Naive thymus-derived CD4-positive, alpha-beta T cell (primary cell): ENCODE measurements at regions of chr4 and their contacts with region 1.

Region 1: GRCh38 chr4:145618932-145619638 is at the start of gene MMAA:
- DNase-seq: peak; percentile 90 to 99 (median 92)
- ATAC-seq: peak; percentile 97
- H3K4me3 ChIP-seq: peak within 1 kb of the TSS; percentile 93
- H3K4me3 Mint-ChIP-seq: peak within 1 kb of the TSS; percentile 90 to 99 (median 98)
- H3K27ac ChIP-seq: peak within 1 kb of the TSS; percentile 94
- H3K27ac Mint-ChIP-seq: peak within 1 kb of the TSS; percentile 95 to 100 (median 99)
- H3K4me1 ChIP-seq: peaks cover 18 to 29% of the 10 kb centered on the region in 2 donors
- H3K4me1 Mint-ChIP-seq: peaks cover 16 to 55% (median 47%) of the 10 kb centered on the region in 7 donors
- H3K27me3 ChIP-seq: no peaks in the 10 kb centered on the region
- H3K27me3 Mint-ChIP-seq: peaks cover 1 to 5% (median 5%) of the 10 kb centered on the region in 5 donors
- total RNA-seq, gene MMAA: 7.2 to 17.3 (median 12.8) TPM

Region 2: GRCh38 chr4:145097821-145098674 is 521.0 kb before region 1 on chr4 and contains the starts of genes ABCE1 and ANAPC10:
- CTCF ChIA-PET with region 1: interaction called, 3 read pairs
- POLR2A ChIA-PET with region 1: interaction called, 6 read pairs
- intact Hi-C with region 1: loop called (anchors 1 kb)
- DNase-seq: peak; percentile 88 to 98 (median 94)
- ATAC-seq: peak; percentile 96
- H3K4me3 ChIP-seq: peak within 1 kb of the TSS; percentile 94
- H3K4me3 Mint-ChIP-seq: peak within 1 kb of the TSS in 9 of 10 donors; percentile 93 to 98 (median 96)
- H3K27ac ChIP-seq: peak within 1 kb of the TSS; percentile 80
- H3K27ac Mint-ChIP-seq: peak within 1 kb of the TSS; percentile 95 to 99 (median 98)
- H3K4me1 ChIP-seq: peaks cover 22 to 23% of the 10 kb centered on the region in 2 donors
- H3K4me1 Mint-ChIP-seq: peaks cover 28 to 52% (median 33%) of the 10 kb centered on the region in 7 donors
- H3K27me3 ChIP-seq: no peaks in the 10 kb centered on the region
- H3K27me3 Mint-ChIP-seq: no peaks in the 10 kb centered on the region
- total RNA-seq, gene ABCE1: 43.4 to 81.3 (median 62.2) TPM
- total RNA-seq, gene ANAPC10: 13.2 to 28.0 (median 19.6) TPM

Region 3: GRCh38 chr4:145234091-145234706 is 384.9 kb before region 1 on chr4:
- CTCF ChIA-PET with region 1: interaction called, 22 read pairs
- POLR2A ChIA-PET with region 1: interaction called, 5 read pairs
- intact Hi-C with region 1: loop called (anchors 1 kb)
- DNase-seq: peak; percentile 7 to 56 (median 46)
- ATAC-seq: peak; percentile 98
- H3K4me3 ChIP-seq: no peak overlapping the region
- H3K4me3 Mint-ChIP-seq: no peak overlapping the region
- H3K27ac ChIP-seq: no peak overlapping the region
- H3K27ac Mint-ChIP-seq: no peak overlapping the region
- H3K4me1 ChIP-seq: no peaks in the 10 kb centered on the region
- H3K4me1 Mint-ChIP-seq: no peaks in the 10 kb centered on the region
- H3K27me3 ChIP-seq: no peaks in the 10 kb centered on the region
- H3K27me3 Mint-ChIP-seq: peaks cover 0 to 16% (median 0%) of the 10 kb centered on the region in 5 donors

Region 4: GRCh38 chr4:145545538-145546174 is 73.4 kb before region 1 on chr4:
- CTCF ChIA-PET with region 1: no interaction called
- POLR2A ChIA-PET with region 1: no interaction called
- intact Hi-C with region 1: no loop called
- DNase-seq: no peak
- ATAC-seq: no peak
- H3K4me3 ChIP-seq: no peak overlapping the region
- H3K4me3 Mint-ChIP-seq: no peak overlapping the region
- H3K27ac ChIP-seq: no peak overlapping the region
- H3K27ac Mint-ChIP-seq: no peak overlapping the region
- H3K4me1 ChIP-seq: no peaks in the 10 kb centered on the region
- H3K4me1 Mint-ChIP-seq: peaks cover 0 to 3% (median 0%) of the 10 kb centered on the region in 7 donors
- H3K27me3 ChIP-seq: no peaks in the 10 kb centered on the region
- H3K27me3 Mint-ChIP-seq: peaks cover 0 to 7% (median 0%) of the 10 kb centered on the region in 5 donors

Region 5: DNA sequence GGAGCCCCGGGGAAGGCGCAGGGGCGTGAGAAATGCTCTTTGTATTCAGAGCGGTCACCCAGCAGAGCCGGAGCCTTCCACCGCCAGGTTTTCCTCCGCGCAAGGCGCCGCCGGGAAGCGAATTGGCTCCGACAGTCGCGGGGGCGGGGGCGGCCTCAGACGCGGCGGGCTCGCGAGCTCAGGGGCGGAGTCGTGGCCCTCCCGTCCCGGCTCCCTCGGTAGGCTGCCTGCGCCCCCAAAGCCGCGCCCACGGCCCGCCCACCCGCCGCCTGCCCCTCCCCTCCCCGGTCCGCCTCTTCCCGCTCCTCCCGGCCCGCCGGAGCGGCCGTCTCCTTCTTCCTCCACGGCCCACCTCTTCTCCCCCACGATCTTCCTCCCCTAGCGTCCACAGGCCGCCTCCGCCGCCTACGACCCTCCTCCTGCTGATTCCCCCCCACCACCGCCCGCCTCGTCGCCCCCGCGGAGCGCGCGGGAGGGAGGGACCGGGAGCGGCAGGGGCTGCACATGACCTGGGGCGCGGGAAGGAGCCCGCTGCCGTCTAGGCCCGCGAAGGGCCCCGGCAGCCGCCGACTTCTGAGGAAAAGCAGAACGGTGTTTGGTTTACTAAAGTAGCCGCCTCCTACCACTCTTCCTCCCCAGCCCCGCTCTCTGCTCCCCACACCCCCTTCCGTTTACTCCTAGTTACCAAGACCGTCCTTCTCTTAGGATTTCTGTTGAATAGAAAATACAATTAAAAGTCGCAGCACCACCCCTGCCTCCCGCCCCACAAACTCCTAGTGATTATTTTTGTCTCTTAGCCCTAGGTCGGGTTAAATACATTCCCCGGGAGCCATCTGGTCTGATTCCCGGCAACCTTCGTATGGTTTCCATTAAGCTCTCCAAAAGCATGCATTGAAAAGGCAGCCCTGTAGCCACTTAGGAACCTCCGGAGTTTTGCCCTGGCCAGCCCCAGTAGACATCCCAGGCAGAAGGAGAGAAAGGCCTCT is 114.1 kb after region 1 on chr4:
- CTCF ChIA-PET with region 1: no interaction called
- POLR2A ChIA-PET with region 1: interaction called, 5 read pairs
- intact Hi-C with region 1: loop called (anchors 1 kb)
- DNase-seq: peak; percentile 56 to 87 (median 68)
- ATAC-seq: peak; percentile 97
- H3K4me3 ChIP-seq: peak overlapping the region; percentile 59
- H3K4me3 Mint-ChIP-seq: peak overlapping the region; percentile 72 to 86 (median 82)
- H3K27ac ChIP-seq: peak overlapping the region; percentile 63
- H3K27ac Mint-ChIP-seq: peak overlapping the region in 5 of 9 donors; percentile 50 to 77 (median 62)
- H3K4me1 ChIP-seq: peaks cover 0 to 4% of the 10 kb centered on the region in 2 donors
- H3K4me1 Mint-ChIP-seq: peaks cover 0 to 13% (median 9%) of the 10 kb centered on the region in 7 donors
- H3K27me3 ChIP-seq: no peaks in the 10 kb centered on the region
- H3K27me3 Mint-ChIP-seq: peaks cover 0 to 11% (median 3%) of the 10 kb centered on the region in 5 donors

Region 6: DNA sequence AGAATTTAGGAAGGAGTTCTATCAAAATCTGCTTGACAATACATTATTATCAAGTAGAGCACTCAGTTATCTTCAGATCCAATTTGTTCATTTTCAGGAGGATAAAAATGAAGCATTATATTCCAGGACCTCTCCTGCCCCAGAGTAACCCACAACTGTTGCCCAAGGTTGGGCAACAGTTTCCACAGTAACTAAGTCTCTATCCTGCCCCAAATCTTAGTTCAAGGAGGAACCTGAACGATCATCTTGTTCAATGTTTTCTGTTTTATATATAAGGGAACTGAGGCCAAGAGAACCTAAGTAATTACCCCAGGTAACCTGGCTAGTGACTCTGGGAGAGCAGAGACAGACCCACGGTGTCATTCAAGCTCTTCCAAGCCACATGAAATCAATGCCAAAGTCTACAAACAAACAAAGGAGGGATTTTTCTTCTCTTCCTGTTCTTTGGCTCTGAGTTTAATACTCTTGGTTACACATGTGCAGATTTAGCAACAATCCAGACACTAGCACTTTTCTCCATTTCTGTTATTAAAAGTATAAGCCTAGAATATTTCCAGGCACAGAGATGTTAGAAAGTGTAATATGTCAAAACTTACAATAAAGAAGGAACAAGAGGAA is 166.4 kb after region 1 on chr4:
- CTCF ChIA-PET with region 1: no interaction called
- POLR2A ChIA-PET with region 1: no interaction called
- intact Hi-C with region 1: no loop called
- DNase-seq: no peak
- ATAC-seq: no peak
- H3K4me3 ChIP-seq: no peak overlapping the region
- H3K4me3 Mint-ChIP-seq: no peak overlapping the region
- H3K27ac ChIP-seq: no peak overlapping the region
- H3K27ac Mint-ChIP-seq: no peak overlapping the region
- H3K4me1 ChIP-seq: no peaks in the 10 kb centered on the region
- H3K4me1 Mint-ChIP-seq: peaks cover 0 to 9% (median 0%) of the 10 kb centered on the region in 7 donors
- H3K27me3 ChIP-seq: no peaks in the 10 kb centered on the region
- H3K27me3 Mint-ChIP-seq: no peaks in the 10 kb centered on the region

Region 7: DNA sequence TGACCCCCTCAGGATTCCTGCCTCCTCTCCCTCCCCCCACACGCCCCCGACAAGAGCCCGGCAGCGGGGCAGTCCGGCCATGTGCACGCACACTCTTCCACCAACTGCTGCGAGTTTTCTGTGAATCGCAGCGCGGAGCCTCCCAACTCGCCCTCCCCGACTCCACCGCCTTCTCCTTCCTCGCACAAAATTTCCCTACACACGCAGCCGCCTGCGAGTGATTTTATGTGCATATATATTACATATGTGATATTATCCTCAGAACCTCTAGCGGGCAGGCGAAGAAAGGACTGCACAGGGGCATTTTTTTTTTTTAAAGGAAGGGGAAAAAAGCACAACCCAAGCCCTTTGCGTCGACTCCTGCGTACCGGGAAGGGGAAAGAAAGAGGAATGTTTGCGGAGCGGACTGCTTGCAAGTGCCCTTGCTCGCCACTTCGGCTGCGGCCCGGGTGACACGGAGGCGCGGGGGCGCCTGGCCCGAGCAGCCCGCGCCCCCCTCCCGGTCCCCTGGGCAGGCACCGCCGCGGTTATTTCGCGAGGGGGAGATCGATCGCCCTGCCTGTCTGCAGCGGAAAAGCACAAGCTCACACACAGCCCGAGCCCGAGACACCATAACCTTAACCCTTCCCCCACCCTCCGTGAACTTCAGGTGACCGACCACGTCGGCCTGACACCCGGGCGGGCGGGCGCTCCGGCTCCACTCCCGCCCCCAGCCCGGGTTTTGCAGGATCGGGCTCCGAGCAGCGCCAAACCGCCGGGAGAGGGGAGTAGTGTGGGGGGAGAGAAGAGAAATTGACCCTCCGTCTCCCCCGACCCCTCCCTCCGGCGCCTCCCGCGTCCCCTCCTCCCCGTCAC is 317.3 kb after region 1 on chr4:
- CTCF ChIA-PET with region 1: interaction called, 3 read pairs
- POLR2A ChIA-PET with region 1: interaction called, 7 read pairs
- intact Hi-C with region 1: loop called (anchors 1 kb)
- DNase-seq: peak; percentile 35 to 71 (median 66)
- ATAC-seq: peak; percentile 70
- H3K4me3 ChIP-seq: peak overlapping the region; percentile 77
- H3K4me3 Mint-ChIP-seq: peak overlapping the region; percentile 92 to 100 (median 95)
- H3K27ac ChIP-seq: peak overlapping the region; percentile 68
- H3K27ac Mint-ChIP-seq: peak overlapping the region; percentile 87 to 98 (median 93)
- H3K4me1 ChIP-seq: peaks cover 0 to 13% of the 10 kb centered on the region in 2 donors
- H3K4me1 Mint-ChIP-seq: peaks cover 26 to 49% (median 40%) of the 10 kb centered on the region in 7 donors
- H3K27me3 ChIP-seq: no peaks in the 10 kb centered on the region
- H3K27me3 Mint-ChIP-seq: peaks cover 0 to 8% (median 0%) of the 10 kb centered on the region in 5 donors

Region 8: GRCh38 chr4:145984563-145984962 is 365.5 kb after region 1 on chr4:
- CTCF ChIA-PET with region 1: no interaction called
- POLR2A ChIA-PET with region 1: no interaction called
- intact Hi-C with region 1: no loop called
- DNase-seq: no peak
- ATAC-seq: no peak
- H3K4me3 ChIP-seq: no peak overlapping the region
- H3K4me3 Mint-ChIP-seq: no peak overlapping the region
- H3K27ac ChIP-seq: no peak overlapping the region
- H3K27ac Mint-ChIP-seq: no peak overlapping the region
- H3K4me1 ChIP-seq: no peaks in the 10 kb centered on the region
- H3K4me1 Mint-ChIP-seq: no peaks in the 10 kb centered on the region
- H3K27me3 ChIP-seq: no peaks in the 10 kb centered on the region
- H3K27me3 Mint-ChIP-seq: peaks cover 0 to 18% (median 5%) of the 10 kb centered on the region in 5 donors

Region 9: GRCh38 chr4:146202665-146203064 is 583.6 kb after region 1 on chr4:
- CTCF ChIA-PET with region 1: no interaction called
- POLR2A ChIA-PET with region 1: no interaction called
- intact Hi-C with region 1: no loop called
- DNase-seq: no peak
- ATAC-seq: no peak
- H3K4me3 ChIP-seq: no peak overlapping the region
- H3K4me3 Mint-ChIP-seq: no peak overlapping the region
- H3K27ac ChIP-seq: no peak overlapping the region
- H3K27ac Mint-ChIP-seq: no peak overlapping the region
- H3K4me1 ChIP-seq: no peaks in the 10 kb centered on the region
- H3K4me1 Mint-ChIP-seq: peaks cover 0 to 3% (median 0%) of the 10 kb centered on the region in 7 donors
- H3K27me3 ChIP-seq: no peaks in the 10 kb centered on the region
- H3K27me3 Mint-ChIP-seq: peaks cover 0 to 3% (median 0%) of the 10 kb centered on the region in 5 donors

Region 10: DNA sequence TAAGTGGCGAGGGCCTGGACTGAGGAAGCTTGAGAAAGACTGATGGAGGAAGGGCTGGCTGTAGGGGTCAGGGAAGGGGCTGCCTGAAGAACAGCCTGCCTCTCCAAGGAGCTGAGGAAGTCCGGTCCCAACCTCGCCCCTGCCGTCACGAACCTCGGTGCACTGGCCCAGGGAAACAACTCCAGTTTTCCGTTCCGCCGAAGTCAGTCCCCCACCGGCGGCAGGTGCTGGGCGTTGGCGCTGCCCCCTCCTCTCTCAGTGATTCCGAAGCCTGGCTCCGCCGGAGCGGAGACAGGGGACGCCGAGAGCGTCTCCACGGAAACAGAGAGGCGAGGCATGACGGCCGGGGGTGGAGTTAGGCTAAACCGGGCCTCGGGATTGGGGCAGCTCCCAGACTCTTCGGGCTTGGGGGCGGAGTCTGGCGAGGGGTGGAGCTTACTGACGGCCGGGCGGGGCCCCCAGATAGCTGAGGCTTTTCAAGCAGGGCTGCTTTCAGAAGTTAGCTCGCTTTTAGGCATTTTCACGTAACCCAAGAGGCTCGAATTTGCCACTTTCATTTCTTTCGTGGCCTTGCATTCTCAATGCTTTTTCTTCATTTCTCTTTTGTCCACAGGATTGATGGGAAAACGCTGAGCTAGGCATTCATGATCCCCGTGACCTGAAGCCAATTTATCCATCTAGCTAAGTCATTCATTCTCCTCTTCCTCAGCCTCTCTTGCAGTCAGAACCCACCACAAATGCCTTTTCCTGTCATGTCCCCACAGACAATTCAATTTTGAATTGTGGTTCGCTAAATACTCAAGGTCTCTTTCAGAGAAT is 1326.7 kb after region 1 on chr4 and contains the start of gene TTC29:
- CTCF ChIA-PET with region 1: no interaction called
- POLR2A ChIA-PET with region 1: no interaction called
- intact Hi-C with region 1: loop called in 1 of 2 experiments (anchors 10 kb)
- DNase-seq: peak; percentile 63 to 86 (median 82)
- ATAC-seq: peak; percentile 99
- H3K4me3 ChIP-seq: peak within 1 kb of the TSS; percentile 52
- H3K4me3 Mint-ChIP-seq: peak within 1 kb of the TSS; percentile 78 to 96 (median 85)
- H3K27ac ChIP-seq: no peak within 1 kb of the TSS
- H3K27ac Mint-ChIP-seq: peak within 1 kb of the TSS in 7 of 9 donors; percentile 28 to 79 (median 59)
- H3K4me1 ChIP-seq: peaks cover 15 to 18% of the 10 kb centered on the region in 2 donors
- H3K4me1 Mint-ChIP-seq: peaks cover 9 to 38% (median 32%) of the 10 kb centered on the region in 7 donors
- H3K27me3 ChIP-seq: no peaks in the 10 kb centered on the region
- H3K27me3 Mint-ChIP-seq: peaks cover 7 to 64% (median 18%) of the 10 kb centered on the region in 5 donors
- total RNA-seq, gene TTC29: not detected